GM12878 (cell line): ENCODE measurements at regions of chr20 and their contacts with region 1.

Region 1: DNA sequence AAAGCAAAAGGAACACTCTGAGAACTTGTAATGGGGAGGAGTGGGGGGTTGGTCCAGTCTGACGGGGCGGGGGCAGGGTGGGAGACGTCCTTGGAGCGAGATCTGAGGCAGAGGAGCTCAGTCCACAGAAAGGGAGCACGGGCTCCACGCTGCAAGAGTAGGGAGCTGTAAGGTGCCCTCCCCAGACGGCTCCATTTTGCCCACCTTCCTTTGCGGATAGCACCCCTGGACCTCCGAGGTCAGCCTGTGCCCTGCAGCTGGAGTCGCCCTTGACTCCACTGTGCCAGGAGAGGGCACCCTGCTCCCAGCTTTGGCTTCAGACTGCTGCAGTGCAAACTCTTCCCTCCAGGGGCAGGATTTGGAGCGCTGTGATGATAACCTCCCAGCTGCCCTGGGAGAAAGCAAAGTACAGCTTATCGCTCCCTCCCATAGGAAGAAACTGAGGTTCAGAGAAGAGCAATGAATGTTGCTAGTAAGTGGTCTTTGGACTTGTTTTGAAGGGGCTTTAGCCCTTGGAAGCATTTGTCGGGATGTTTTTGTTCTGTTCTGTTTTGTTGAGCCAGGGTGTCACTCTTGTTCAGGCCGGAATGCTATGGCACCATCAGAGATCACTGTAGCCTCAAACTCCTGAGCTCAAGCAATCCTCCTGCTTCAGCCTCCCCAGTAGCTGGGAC is 9.5 kb upstream of the AHCY start:
- DNase-seq: peak; percentile 65
- ATAC-seq: peak; percentile 100
- H3K4me3 ChIP-seq: no peak overlapping the region
- H3K27ac ChIP-seq: no peak overlapping the region
- H3K4me1 ChIP-seq: peaks cover 8% of the 10 kb centered on the region; the same call in 1 of the 2 replicates
- H3K27me3 ChIP-seq: peaks cover 0 to 9% of the 10 kb centered on the region in 2 experiments; a peak in 1 of 4 replicates
- CTCF ChIP-seq: peak; percentile 100; a peak in 5 of 6 replicates
- EP300 ChIP-seq: no peak
- POLR2A ChIP-seq: no peak
- RAD21 ChIP-seq: peak; percentile 100

Region 2: GRCh38 chr20:33796263-33796906 is 516.3 kb before region 1 on chr20:
- CTCF ChIA-PET with region 1: no interaction called
- POLR2A ChIA-PET with region 1: no interaction called
- RAD21 ChIA-PET with region 1: no interaction called
- SMC1A ChIA-PET with region 1: no interaction called
- in situ Hi-C with region 1: no loop called
- intact Hi-C with region 1: no loop called
- DNase-seq: no peak
- ATAC-seq: no peak
- H3K4me3 ChIP-seq: no peak overlapping the region
- H3K27ac ChIP-seq: no peak overlapping the region
- H3K4me1 ChIP-seq: no peaks in the 10 kb centered on the region
- H3K27me3 ChIP-seq: no peaks in the 10 kb centered on the region
- CTCF ChIP-seq: no peak
- EP300 ChIP-seq: no peak
- POLR2A ChIP-seq: no peak
- RAD21 ChIP-seq: no peak

Region 3: GRCh38 chr20:34190679-34191090 is 122.0 kb before region 1 on chr20:
- CTCF ChIA-PET with region 1: interaction called, 4 read pairs
- POLR2A ChIA-PET with region 1: no interaction called
- RAD21 ChIA-PET with region 1: interaction called, 10 read pairs
- SMC1A ChIA-PET with region 1: interaction called, 6 read pairs
- in situ Hi-C with region 1: no loop called
- intact Hi-C with region 1: no loop called
- DNase-seq: no peak
- ATAC-seq: peak; percentile 80
- H3K4me3 ChIP-seq: no peak overlapping the region
- H3K27ac ChIP-seq: no peak overlapping the region
- H3K4me1 ChIP-seq: no peaks in the 10 kb centered on the region
- H3K27me3 ChIP-seq: peaks cover 0 to 5% of the 10 kb centered on the region in 2 experiments; a peak in 3 of 4 replicates
- CTCF ChIP-seq: peak; percentile 63 to 82 (median 75); a peak in 5 of 6 replicates
- EP300 ChIP-seq: no peak
- POLR2A ChIP-seq: no peak
- RAD21 ChIP-seq: peak; percentile 89

Region 4: GRCh38 chr20:34285450-34285849 is 27.2 kb before region 1 on chr20:
- CTCF ChIA-PET with region 1: no interaction called
- POLR2A ChIA-PET with region 1: no interaction called
- RAD21 ChIA-PET with region 1: no interaction called
- SMC1A ChIA-PET with region 1: no interaction called
- in situ Hi-C with region 1: no loop called
- intact Hi-C with region 1: no loop called
- DNase-seq: no peak
- ATAC-seq: no peak
- H3K4me3 ChIP-seq: no peak overlapping the region
- H3K27ac ChIP-seq: no peak overlapping the region
- H3K4me1 ChIP-seq: no peaks in the 10 kb centered on the region
- H3K27me3 ChIP-seq: no peaks in the 10 kb centered on the region
- CTCF ChIP-seq: no peak
- EP300 ChIP-seq: no peak
- POLR2A ChIP-seq: no peak
- RAD21 ChIP-seq: no peak

Region 5: GRCh38 chr20:34377072-34377847 is 64.6 kb after region 1 on chr20:
- CTCF ChIA-PET with region 1: interaction called, 10 read pairs
- POLR2A ChIA-PET with region 1: no interaction called
- RAD21 ChIA-PET with region 1: interaction called, 9 read pairs
- SMC1A ChIA-PET with region 1: interaction called, 6 read pairs
- in situ Hi-C with region 1: no loop called
- intact Hi-C with region 1: no loop called
- DNase-seq: peak; percentile 72
- ATAC-seq: peak; percentile 96
- H3K4me3 ChIP-seq: no peak overlapping the region
- H3K27ac ChIP-seq: no peak overlapping the region
- H3K4me1 ChIP-seq: peaks cover 15% of the 10 kb centered on the region
- H3K27me3 ChIP-seq: no peaks in the 10 kb centered on the region
- CTCF ChIP-seq: no peak
- EP300 ChIP-seq: peak; percentile 30 to 40; a peak in 1 of 4 replicates
- POLR2A ChIP-seq: no peak
- RAD21 ChIP-seq: no peak

Region 6: GRCh38 chr20:34437330-34437986 is 124.8 kb after region 1 on chr20:
- CTCF ChIA-PET with region 1: interaction called, 30 read pairs
- POLR2A ChIA-PET with region 1: no interaction called
- RAD21 ChIA-PET with region 1: interaction called, 12 read pairs
- SMC1A ChIA-PET with region 1: interaction called, 14 read pairs
- in situ Hi-C with region 1: no loop called
- intact Hi-C with region 1: no loop called
- DNase-seq: no peak
- ATAC-seq: no peak
- H3K4me3 ChIP-seq: no peak overlapping the region
- H3K27ac ChIP-seq: no peak overlapping the region
- H3K4me1 ChIP-seq: no peaks in the 10 kb centered on the region
- H3K27me3 ChIP-seq: no peaks in the 10 kb centered on the region
- CTCF ChIP-seq: no peak
- EP300 ChIP-seq: no peak
- POLR2A ChIP-seq: no peak
- RAD21 ChIP-seq: no peak

Region 7: DNA sequence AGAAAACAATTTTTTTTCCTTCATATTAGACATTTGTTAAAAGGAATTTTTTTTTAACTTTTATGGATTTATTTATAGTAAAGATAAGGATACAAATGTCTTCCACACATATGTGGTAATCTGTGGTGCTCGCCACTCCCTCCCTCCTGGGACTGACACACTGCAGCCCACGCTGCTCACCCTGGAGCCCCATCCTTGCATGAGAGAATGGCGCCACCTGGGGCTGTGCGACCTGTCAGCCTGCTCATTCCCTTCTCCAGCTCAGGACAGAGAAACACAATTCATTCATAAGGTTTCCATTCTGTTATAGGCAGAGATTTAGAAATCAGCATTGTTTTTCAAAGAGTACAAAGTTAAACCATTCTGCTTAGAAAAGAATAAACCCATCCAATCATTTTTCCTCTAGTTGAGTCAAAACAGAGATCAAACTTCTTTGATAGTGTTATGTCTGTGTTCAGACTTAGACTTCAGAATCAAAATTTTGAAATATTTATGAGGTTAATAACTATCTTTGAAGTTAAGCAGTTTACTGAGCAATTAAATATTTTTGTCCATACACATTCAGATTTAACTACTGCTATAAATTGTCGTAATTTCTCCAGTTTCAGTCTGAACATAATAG is 160.7 kb after region 1 on chr20:
- CTCF ChIA-PET with region 1: interaction called, 75 read pairs
- POLR2A ChIA-PET with region 1: no interaction called
- RAD21 ChIA-PET with region 1: interaction called, 49 read pairs
- SMC1A ChIA-PET with region 1: interaction called, 46 read pairs
- in situ Hi-C with region 1: no loop called
- intact Hi-C with region 1: loop called (anchors 1 kb)
- DNase-seq: no peak
- ATAC-seq: peak; percentile 85
- H3K4me3 ChIP-seq: no peak overlapping the region
- H3K27ac ChIP-seq: no peak overlapping the region
- H3K4me1 ChIP-seq: peaks cover 8% of the 10 kb centered on the region
- H3K27me3 ChIP-seq: no peaks in the 10 kb centered on the region
- CTCF ChIP-seq: peak; percentile 34 to 50 (median 41); a peak in 5 of 6 replicates
- EP300 ChIP-seq: no peak
- POLR2A ChIP-seq: no peak
- RAD21 ChIP-seq: peak; percentile 70

Region 8: GRCh38 chr20:34532406-34532719 is 219.7 kb after region 1 on chr20:
- CTCF ChIA-PET with region 1: interaction called, 57 read pairs
- POLR2A ChIA-PET with region 1: no interaction called
- RAD21 ChIA-PET with region 1: interaction called, 21 read pairs
- SMC1A ChIA-PET with region 1: interaction called, 6 read pairs
- in situ Hi-C with region 1: no loop called
- intact Hi-C with region 1: no loop called
- DNase-seq: no peak
- ATAC-seq: no peak
- H3K4me3 ChIP-seq: no peak overlapping the region
- H3K27ac ChIP-seq: no peak overlapping the region
- H3K4me1 ChIP-seq: no peaks in the 10 kb centered on the region
- H3K27me3 ChIP-seq: no peaks in the 10 kb centered on the region
- CTCF ChIP-seq: no peak
- EP300 ChIP-seq: no peak
- POLR2A ChIP-seq: no peak
- RAD21 ChIP-seq: no peak

Region 9: DNA sequence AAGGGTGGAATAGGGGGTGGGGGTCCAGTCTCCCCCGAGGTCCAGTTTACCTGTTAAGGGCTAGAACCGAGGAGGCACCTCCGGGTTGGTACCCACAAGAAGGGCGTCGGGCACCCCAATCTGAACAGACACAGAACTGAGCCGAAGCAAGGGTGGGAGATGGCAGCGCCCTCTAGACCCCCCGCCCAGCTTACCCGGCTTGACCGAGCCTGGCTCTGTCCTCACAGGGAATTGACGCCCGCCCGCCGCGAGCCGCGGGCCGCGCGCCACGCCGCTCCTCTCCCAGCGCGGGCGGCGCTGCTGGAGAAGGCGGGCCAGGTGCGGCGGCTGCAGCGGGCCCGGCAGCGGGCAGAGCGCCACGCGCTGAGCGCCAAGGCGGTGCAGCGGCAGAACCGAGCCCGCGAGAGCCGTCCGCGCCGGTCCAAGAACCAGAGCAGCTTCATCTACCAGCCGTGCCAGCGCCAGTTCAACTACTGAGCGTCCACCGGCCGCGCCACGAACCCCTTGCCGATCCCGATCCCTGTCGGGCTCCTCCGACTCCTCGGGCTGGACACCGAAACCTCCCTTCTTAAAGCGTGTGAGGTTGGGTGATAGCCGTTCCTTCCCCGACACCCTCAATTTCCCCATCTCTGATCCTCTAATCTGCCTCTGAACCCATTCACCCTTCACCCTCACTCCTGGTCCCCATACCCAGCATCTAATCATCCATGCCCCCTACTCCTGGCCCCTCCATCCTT is 397.3 kb after region 1 on chr20:
- CTCF ChIA-PET with region 1: interaction called, 60 read pairs
- POLR2A ChIA-PET with region 1: interaction called, 4 read pairs
- RAD21 ChIA-PET with region 1: interaction called, 36 read pairs
- SMC1A ChIA-PET with region 1: interaction called, 26 read pairs
- in situ Hi-C with region 1: no loop called
- intact Hi-C with region 1: loop called (anchors 5 kb)
- DNase-seq: no peak
- ATAC-seq: peak; percentile 51
- H3K4me3 ChIP-seq: peak overlapping the region; percentile 91
- H3K27ac ChIP-seq: peak overlapping the region; percentile 86
- H3K4me1 ChIP-seq: peaks cover 23% of the 10 kb centered on the region
- H3K27me3 ChIP-seq: no peaks in the 10 kb centered on the region
- CTCF ChIP-seq: peak; percentile 31 to 47 (median 41); a peak in 5 of 6 replicates
- EP300 ChIP-seq: no peak
- POLR2A ChIP-seq: no peak
- RAD21 ChIP-seq: no peak